ENCODE measurements at regions of chr10 and their contacts with region 1.

Region 1: DNA sequence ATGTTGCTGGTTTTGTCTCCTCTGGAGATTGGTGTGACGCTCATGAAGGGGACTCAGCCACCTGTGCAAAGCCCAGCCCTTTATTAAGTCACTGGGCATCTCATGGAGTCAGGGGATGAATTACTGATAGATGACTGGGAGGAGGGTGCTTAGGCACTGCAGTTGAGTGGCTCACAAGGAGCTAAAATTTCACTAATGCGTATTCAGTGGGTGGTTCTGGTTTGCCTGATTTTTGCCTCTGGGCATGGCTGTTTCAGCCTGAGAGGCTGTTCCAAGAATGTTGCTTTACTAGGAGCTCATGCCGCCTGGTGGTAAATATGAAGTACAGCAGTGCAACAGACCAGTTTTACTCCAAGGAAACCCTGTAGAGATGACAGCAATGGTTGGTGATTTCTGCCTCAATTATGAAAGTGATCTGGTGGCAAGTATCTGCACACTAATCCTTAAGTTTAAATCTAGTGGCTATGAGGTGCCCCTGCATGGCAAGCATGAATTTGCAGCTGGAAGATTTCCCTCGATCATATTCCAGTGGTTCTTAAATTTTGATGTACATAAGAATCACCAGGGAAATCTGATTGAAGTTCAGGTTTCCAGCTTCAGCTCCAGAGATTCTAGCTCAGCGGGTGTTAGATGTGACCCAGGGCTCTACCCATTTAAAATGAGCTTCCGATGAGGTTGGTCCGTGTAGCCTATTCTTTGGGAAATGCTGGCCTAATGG is 19.9 kb downstream of the ACTA2 start:
- DNase-seq: no peak
- ATAC-seq: peak; percentile 74

Region 2: GRCh38 chr10:89217057-89217990 is 284.6 kb after region 1 on chr10:
- intact Hi-C with region 1: loop called (anchors 1 kb)
- DNase-seq: no peak
- ATAC-seq: no peak